Caco-2 (cell line): ENCODE measurements at regions of chr20 and their contacts with region 1.

Region 1: DNA sequence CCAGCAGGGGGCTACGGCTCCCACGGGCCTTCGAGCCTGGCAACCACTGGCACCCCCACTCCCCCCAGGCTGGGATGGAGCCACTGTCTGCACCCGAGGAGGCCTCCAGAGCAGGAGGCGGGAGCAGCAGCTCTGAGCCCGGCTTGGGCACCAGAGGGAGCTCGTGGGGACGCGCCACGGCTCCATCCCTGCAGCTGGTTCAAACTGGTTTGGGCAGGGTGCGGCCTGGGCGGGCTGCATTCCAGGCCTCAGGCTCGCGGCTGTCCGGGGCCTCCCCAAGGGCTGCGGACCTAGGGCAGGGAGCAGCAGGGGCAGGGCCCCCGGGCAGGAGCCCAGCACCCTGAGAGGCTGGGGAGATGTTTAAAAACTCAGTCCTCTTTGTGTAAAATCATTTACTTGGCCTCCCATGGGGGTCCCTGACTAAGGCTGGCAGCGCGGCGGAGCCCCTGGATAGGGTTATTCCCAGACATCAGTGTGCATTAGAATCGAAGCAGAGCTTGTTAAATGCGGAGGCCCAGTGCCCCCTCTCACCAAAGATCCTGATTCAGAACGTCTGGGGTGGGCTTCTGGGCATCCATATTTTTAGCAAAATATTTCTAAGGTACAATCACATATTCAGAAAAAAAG is 4.1 kb upstream of the BCAS4 start:
- DNase-seq: peak; percentile 100
- H3K4me3 ChIP-seq: no peak overlapping the region
- H3K4me3 Mint-ChIP-seq: peak overlapping the region; percentile 74
- H3K27ac Mint-ChIP-seq: peak overlapping the region; percentile 99
- H3K4me1 ChIP-seq: peaks cover 47% of the 10 kb centered on the region
- H3K4me1 Mint-ChIP-seq: peaks cover 62% of the 10 kb centered on the region
- H3K27me3 ChIP-seq: no peaks in the 10 kb centered on the region
- H3K27me3 Mint-ChIP-seq: no peaks in the 10 kb centered on the region
- CTCF ChIP-seq: peak; percentile 97 to 100

Region 2: DNA sequence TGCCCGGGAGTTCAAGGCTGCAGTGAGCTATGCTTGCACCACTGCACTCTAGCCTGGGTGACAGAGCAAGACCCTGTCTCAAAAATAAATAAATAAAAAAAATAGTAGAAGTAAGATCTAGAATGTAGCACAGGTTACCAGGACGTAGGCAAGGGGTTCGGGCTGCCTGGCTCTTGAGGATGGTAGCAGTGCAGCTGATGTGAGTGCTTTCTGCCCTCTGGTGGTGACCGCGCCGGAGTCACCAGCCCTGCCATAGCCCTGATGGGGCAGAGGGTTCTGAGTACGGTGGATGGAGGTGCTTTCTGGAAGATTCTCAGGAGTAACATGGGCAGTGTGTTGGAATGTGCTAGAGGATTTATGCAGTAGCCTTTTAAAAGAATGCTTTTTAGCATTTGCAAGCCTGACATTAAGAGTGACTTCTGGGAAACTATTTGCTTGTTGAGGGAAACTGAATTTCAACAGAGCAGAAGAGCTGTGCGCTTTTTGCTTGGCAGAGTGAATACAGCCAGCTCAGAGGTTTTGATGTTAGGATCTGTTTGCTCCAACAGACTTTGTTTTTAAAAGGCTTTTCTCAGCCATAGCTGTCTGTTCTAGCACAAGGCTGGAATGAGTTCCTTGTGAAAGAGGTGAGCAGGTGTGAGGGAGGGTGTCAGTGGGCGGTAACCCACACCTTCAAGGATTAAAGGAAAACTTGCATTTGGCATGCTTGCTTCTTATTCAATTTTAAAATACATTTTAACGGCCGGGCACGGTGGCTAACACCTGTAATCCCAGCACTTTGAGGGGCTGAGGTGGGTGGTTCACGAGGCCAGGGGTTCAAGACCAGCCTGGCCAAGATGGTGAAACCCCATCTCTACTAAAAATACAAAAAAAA is 214.7 kb before region 1 on chr20:
- CTCF ChIA-PET with region 1: no interaction called
- POLR2A ChIA-PET with region 1: interaction called, 3 read pairs
- intact Hi-C with region 1: loop called (anchors 1 kb)
- DNase-seq: peak; percentile 79 to 88
- H3K4me3 ChIP-seq: no peak overlapping the region
- H3K4me3 Mint-ChIP-seq: no peak overlapping the region
- H3K27ac Mint-ChIP-seq: no peak overlapping the region
- H3K4me1 ChIP-seq: no peaks in the 10 kb centered on the region
- H3K4me1 Mint-ChIP-seq: peaks cover 7% of the 10 kb centered on the region
- H3K27me3 ChIP-seq: no peaks in the 10 kb centered on the region
- H3K27me3 Mint-ChIP-seq: no peaks in the 10 kb centered on the region
- CTCF ChIP-seq: peak; percentile 97 to 99

Region 3: DNA sequence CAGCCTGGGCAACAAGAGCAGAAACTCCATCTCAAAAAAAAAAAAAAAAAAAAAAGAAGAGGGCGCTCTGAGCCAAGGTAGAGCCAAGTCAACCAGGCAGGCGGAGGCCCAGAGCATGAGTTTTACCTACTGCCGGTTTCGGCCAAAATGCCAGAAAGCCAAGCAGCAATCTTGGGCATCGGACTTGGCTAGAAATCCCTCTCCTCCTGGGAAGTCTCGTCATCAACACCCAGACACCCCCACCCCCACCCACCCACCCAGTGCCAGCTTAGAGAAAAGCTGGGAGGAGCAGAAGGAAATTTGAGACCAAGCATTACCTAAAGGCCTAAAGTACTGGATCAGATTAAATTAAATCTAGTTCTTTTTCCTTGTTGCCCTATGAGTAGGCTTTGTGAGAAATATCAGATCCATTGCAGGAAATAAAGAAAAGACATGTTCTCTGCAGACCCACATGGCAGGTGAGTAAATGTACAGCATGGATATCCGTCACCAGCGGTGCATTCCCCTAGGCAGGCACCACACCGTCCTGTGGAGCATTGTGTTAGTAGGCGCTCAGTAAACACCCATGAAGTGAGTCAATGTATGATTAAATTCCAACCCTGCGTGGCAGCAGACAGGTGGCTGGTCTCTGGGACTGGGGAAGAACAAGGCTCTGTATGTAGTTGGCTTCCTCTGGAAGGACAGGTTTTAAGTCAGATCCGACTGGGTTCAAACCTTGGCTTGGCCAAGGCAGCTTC is 120.5 kb before region 1 on chr20:
- CTCF ChIA-PET with region 1: interaction called, 24 read pairs
- POLR2A ChIA-PET with region 1: interaction called, 4 read pairs
- intact Hi-C with region 1: no loop called
- DNase-seq: peak; percentile 86 to 89
- H3K4me3 ChIP-seq: no peak overlapping the region
- H3K4me3 Mint-ChIP-seq: no peak overlapping the region
- H3K27ac Mint-ChIP-seq: peak overlapping the region; percentile 71
- H3K4me1 ChIP-seq: peaks cover 82% of the 10 kb centered on the region
- H3K4me1 Mint-ChIP-seq: peaks cover 76% of the 10 kb centered on the region
- H3K27me3 ChIP-seq: no peaks in the 10 kb centered on the region
- H3K27me3 Mint-ChIP-seq: no peaks in the 10 kb centered on the region
- CTCF ChIP-seq: no peak

Region 4: DNA sequence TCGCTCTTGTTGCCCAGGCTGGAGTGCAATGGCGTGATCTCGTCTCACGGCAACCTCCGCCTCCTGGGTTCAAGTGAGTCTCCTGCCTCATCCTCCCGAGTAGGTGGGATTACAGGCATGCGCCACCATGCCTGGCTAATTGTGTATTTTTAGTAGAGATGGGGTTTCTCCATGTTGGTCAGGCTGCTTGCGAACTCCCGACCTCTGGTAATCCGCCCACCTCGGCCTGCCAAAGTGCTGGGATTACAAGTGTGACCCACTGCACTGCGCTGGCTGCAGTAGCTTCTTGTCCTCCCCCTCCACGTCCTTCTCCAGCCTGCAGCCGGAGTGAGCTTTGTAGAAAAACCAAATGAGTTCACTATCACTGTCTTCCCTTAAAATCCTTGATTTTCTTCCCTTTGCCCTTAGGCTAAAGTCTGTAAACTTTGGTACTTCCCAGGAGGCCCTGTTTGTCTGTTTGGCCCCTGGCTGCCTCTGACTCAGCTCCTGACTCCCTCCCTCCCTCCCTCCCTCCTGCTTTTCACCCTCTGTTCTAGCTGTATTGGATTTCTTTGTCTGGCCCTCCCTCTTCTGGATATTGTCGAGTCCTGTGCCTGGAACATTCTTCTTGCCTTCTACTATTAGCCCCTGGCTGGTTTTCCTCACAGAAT is 46.5 kb before region 1 on chr20:
- CTCF ChIA-PET with region 1: interaction called, 40 read pairs
- POLR2A ChIA-PET with region 1: interaction called, 3 read pairs
- intact Hi-C with region 1: loop called (anchors 1 kb)
- DNase-seq: peak; percentile 90 to 98
- H3K4me3 ChIP-seq: peak overlapping the region; percentile 8
- H3K4me3 Mint-ChIP-seq: peak overlapping the region; percentile 60
- H3K27ac Mint-ChIP-seq: peak overlapping the region; percentile 76
- H3K4me1 ChIP-seq: peaks cover 93% of the 10 kb centered on the region
- H3K4me1 Mint-ChIP-seq: peaks cover 75% of the 10 kb centered on the region
- H3K27me3 ChIP-seq: no peaks in the 10 kb centered on the region
- H3K27me3 Mint-ChIP-seq: no peaks in the 10 kb centered on the region
- CTCF ChIP-seq: peak; percentile 62 to 75

Region 5: GRCh38 chr20:50913690-50914375 is 123.1 kb after region 1 on chr20:
- CTCF ChIA-PET with region 1: interaction called, 12 read pairs
- POLR2A ChIA-PET with region 1: interaction called, 5 read pairs
- intact Hi-C with region 1: loop called (anchors 5 kb)
- DNase-seq: no peak
- H3K4me3 ChIP-seq: no peak overlapping the region
- H3K4me3 Mint-ChIP-seq: no peak overlapping the region
- H3K27ac Mint-ChIP-seq: peak overlapping the region; percentile 75
- H3K4me1 ChIP-seq: peaks cover 64% of the 10 kb centered on the region
- H3K4me1 Mint-ChIP-seq: peaks cover 82% of the 10 kb centered on the region
- H3K27me3 ChIP-seq: no peaks in the 10 kb centered on the region
- H3K27me3 Mint-ChIP-seq: no peaks in the 10 kb centered on the region
- CTCF ChIP-seq: no peak

Region 6: DNA sequence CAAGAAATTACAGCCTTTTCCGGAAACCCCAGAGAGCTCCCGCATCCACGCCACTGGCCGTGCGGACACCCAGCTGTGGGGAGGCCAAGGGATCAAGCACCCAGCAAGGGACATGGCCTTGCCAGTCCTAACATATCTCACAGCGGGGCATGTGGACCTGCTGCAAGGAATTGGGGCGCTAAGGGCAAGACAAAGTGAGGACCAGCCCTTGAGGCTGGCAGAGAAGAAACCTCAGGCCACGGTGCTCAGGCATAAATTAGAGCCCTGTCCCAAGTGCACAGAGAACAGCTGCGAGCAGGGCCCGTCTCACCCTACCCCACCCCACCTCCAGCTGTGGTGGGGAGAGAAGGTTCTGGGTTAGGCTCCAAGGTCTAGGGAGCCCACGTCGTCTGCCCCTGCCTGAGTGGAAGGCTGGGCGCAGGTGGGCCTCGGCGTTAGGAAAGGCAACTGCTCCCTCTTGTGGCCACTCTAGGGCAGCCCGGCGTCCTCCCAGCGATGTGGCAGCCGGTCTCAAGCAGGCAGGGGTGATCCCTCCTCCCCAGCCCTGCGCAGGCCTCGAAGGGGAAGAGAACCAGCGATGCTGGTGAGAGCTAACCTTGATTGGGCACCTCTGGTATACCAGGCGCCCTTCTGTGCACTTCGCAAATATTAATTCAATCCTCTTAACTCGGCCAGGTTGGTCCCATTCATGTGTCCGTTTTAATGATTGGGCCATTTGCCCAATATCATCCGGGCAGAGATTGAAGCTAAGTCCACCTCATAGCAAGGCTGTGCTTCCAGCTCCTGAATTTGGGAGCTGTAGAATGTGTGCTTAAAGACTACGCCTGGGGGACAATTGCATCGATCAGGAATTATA is 516.0 kb after region 1 on chr20:
- CTCF ChIA-PET with region 1: interaction called, 6 read pairs
- POLR2A ChIA-PET with region 1: no interaction called
- intact Hi-C with region 1: loop called (anchors 5 kb)
- DNase-seq: peak; percentile 86 to 91
- H3K4me3 ChIP-seq: no peak overlapping the region
- H3K4me3 Mint-ChIP-seq: no peak overlapping the region
- H3K27ac Mint-ChIP-seq: no peak overlapping the region
- H3K4me1 ChIP-seq: peaks cover 30% of the 10 kb centered on the region
- H3K4me1 Mint-ChIP-seq: peaks cover 27% of the 10 kb centered on the region
- H3K27me3 ChIP-seq: no peaks in the 10 kb centered on the region
- H3K27me3 Mint-ChIP-seq: no peaks in the 10 kb centered on the region
- CTCF ChIP-seq: peak; percentile 99